Colonic mucosa (tissue), 4 donors: ENCODE measurements at regions of chr12 and their contacts with region 1.

Region 1: GRCh38 chr12:56299853-56300643 is at the start of gene CS:
- DNase-seq: peak; percentile 99
- H3K4me3 ChIP-seq: peak within 1 kb of the TSS; percentile 93
- H3K27ac ChIP-seq: peak within 1 kb of the TSS; percentile 98
- H3K4me1 ChIP-seq: peaks cover 29% of the 10 kb centered on the region
- H3K27me3 ChIP-seq: no peaks in the 10 kb centered on the region
- CTCF ChIP-seq: no peak
- total RNA-seq, gene CS: 367 to 437 TPM

Region 2: DNA sequence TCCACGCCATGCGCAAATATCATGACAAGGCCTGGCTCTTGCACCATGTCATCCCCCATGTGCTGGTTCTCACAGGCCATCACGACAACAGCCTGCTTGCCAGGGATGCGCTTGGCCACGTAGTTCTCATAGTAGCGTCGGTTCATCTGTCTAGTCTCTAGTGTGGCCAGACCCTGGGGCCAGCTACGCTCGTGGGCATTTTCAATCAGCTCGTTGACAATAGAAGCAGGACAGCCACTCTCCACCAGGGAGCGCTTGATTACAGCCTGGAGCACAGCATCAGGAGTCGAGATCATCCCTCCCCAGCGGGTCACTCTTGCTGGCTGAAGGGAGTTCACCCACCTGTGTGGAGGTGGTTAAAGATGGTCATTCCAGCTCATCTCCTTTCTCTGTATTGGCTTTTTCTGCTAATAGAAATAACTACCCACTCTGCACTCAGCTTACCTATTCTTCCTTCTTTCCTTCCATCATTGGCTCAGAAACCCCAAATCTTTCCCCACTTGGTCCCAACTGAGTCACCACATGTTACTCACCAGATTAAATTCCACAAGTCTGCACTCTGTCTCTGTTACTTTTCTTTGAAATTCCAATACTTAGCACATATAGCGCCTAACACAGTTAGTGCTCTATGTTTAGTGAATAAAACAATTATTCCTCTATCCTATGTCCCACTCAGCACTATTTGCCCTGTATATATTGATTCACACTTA is 93.4 kb before region 1 on chr12:
- intact Hi-C with region 1: loop called (anchors 10 kb)
- DNase-seq: peak; percentile 77
- H3K4me3 ChIP-seq: no peak overlapping the region
- H3K27ac ChIP-seq: no peak overlapping the region
- H3K4me1 ChIP-seq: no peaks in the 10 kb centered on the region
- H3K27me3 ChIP-seq: no peaks in the 10 kb centered on the region
- CTCF ChIP-seq: peak; percentile 46

Region 3: DNA sequence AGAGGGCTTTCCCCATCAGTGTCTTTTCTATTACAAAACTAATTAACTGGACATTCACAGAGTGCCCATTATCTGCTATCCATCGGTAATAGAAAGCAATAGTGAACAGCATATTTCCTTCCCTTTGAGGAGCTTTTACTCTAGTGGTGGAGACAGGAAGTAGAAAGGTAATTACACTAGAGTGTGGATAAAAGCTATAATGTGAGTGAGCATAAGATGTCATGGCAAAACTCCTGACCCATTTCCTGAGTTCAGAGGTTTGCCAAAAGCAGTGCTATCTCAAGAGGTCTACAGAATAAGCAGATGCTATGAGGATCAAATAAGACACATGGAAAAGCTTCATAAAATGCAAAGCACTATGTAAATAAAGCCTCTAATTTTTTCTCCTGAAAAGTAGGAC is 125.1 kb after region 1 on chr12:
- intact Hi-C with region 1: no loop called
- DNase-seq: no peak
- H3K4me3 ChIP-seq: no peak overlapping the region
- H3K27ac ChIP-seq: no peak overlapping the region
- H3K4me1 ChIP-seq: no peaks in the 10 kb centered on the region
- H3K27me3 ChIP-seq: no peaks in the 10 kb centered on the region
- CTCF ChIP-seq: no peak